ENCODE measurements at regions of chr7 and their contacts with region 1.

Region 1: DNA sequence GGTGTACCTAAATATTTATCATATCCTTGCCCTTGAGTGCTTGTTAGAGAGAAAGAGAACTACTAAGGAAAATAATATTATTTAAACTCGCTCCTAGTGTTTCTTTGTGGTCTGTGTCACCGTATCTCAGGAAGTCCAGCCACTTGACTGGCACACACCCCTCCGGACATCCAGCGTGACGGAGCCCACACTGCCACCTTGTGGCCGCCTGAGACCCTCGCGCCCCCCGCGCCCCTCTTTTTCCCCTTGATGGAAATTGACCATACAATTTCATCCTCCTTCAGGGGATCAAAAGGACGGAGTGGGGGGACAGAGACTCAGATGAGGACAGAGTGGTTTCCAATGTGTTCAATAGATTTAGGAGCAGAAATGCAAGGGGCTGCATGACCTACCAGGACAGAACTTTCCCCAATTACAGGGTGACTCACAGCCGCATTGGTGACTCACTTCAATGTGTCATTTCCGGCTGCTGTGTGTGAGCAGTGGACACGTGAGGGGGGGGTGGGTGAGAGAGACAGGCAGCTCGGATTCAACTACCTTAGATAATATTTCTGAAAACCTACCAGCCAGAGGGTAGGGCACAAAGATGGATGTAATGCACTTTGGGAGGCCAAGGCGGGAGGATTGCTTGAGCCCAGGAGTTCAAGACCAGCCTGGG is 11.4 kb downstream of the SERPINE1 start:
- DNase-seq: peak; percentile 87
- H3K4me3 ChIP-seq: no peak overlapping the region
- CTCF ChIP-seq: peak; percentile 70

Region 2: DNA sequence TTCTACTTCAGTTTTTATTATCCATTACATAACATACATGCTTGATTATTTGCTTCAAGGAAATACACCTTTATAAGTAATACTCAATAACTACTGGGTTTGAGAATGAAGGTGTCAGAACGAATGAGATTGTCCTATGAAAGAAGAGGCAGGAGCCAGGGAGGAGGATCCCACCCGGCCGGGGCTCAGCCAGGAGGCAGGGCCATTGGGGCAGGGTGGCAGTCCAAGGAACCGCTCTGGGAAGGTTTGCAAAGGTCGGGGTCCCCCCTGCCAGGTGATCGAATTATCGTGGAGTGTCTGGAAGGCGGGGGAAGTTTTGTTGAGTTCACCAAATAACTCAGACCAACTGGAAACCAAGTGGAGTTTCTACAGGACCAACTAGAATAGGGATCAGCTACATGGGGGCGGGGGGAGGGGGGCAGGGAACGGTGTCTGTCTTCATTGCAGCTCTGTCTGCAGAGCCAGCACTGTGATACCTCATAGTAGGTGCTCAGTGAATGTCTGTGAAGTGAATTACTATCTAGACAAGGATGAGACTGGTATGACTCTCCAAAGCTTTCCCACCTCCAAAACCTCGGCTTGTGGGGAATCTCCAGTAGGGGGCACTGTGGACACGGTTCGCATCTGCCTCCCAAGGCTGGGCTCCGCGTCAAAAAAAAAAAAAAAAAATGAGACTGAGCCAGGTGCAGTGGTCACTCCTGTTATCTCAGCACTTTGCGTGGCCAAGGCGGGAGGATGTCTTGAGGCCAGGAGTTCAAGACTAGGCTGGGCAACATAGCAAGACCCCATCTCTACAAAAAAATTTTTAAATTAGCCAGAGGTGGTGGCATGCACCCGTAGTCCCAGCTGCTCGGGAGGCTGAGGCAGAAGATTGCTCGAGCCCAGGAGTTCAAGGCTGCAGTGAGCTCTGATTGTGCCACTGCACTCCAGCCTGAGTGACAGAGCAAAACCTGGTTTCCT is 43.6 kb before region 1 on chr7:
- CTCF ChIA-PET with region 1: interaction called, 55 read pairs
- POLR2A ChIA-PET with region 1: interaction called, 30 read pairs
- DNase-seq: no peak
- H3K4me3 ChIP-seq: no peak overlapping the region
- CTCF ChIP-seq: peak; percentile 71

Region 3: DNA sequence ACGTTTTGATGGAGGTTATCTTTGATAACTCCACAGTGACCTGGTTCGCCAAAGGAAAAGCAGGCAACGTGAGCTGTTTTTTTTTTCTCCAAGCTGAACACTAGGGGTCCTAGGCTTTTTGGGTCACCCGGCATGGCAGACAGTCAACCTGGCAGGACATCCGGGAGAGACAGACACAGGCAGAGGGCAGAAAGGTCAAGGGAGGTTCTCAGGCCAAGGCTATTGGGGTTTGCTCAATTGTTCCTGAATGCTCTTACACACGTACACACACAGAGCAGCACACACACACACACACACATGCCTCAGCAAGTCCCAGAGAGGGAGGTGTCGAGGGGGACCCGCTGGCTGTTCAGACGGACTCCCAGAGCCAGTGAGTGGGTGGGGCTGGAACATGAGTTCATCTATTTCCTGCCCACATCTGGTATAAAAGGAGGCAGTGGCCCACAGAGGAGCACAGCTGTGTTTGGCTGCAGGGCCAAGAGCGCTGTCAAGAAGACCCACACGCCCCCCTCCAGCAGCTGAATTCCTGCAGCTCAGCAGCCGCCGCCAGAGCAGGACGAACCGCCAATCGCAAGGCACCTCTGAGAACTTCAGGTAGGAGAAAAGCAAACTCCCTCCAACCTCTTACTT is 11.6 kb before region 1 on chr7 and contains the start of gene SERPINE1:
- CTCF ChIA-PET with region 1: interaction called, 11 read pairs
- POLR2A ChIA-PET with region 1: interaction called, 61 read pairs
- DNase-seq: peak; percentile 99
- H3K4me3 ChIP-seq: peak within 1 kb of the TSS; percentile 86
- CTCF ChIP-seq: no peak

Region 4: GRCh38 chr7:101165075-101165957 is 27.0 kb after region 1 on chr7 and contains the start of gene VGF:
- CTCF ChIA-PET with region 1: interaction called, 28 read pairs
- POLR2A ChIA-PET with region 1: no interaction called
- DNase-seq: no peak
- H3K4me3 ChIP-seq: peak within 1 kb of the TSS; percentile 13
- CTCF ChIP-seq: no peak

Region 5: DNA sequence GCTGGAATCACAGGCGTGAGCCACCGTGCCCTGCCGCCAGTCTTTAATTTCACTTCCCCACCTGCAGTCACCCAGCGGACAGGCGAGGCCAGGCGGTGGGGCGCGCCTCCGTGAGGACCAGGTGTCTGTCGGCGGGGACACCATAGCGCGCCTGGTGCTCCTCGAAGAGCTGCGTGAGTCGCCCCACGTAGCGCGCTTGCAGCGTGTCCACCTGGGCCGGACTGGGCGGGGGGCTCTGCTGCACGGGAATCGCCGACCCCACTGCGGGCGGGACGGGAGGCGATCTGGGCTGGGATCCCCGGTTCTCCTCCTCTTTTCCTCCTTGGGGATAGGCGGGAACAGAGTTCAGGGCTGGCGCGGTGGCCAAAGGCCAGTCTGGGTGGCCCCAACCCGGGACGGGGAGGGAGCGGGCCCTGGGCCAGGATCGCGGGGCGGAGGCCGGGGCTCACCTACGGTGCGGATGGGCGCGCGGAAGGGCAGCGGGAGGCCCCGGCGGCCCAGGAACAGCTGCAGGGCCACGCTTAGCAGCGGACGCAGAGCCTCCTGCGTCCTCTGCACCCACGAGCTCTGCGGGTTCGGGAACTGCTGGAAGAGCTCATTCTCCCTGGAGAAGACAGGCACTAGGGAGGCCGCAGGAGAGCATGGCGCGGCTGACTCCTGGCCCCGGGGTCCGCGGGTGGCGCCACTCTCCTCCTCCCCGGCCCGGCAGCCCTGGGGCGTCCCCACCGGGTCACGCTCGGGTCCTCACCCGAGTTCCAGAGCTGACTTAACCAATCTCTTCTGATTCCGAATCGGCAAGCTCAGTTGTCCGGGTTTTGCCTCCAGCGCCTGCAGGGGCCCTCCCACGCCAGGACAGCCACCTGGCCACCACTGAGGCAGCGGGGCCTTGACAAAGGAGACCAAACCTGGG is 63.6 kb after region 1 on chr7:
- CTCF ChIA-PET with region 1: interaction called, 353 read pairs
- POLR2A ChIA-PET with region 1: no interaction called
- DNase-seq: no peak
- H3K4me3 ChIP-seq: no peak overlapping the region
- CTCF ChIP-seq: no peak

Region 6: GRCh38 chr7:101251871-101252659 is 113.7 kb after region 1 on chr7:
- CTCF ChIA-PET with region 1: interaction called, 95 read pairs
- POLR2A ChIA-PET with region 1: no interaction called
- DNase-seq: peak; percentile 90
- H3K4me3 ChIP-seq: peak overlapping the region; percentile 70
- CTCF ChIP-seq: no peak

Region 7: GRCh38 chr7:101386558-101387231 is 248.4 kb after region 1 on chr7:
- CTCF ChIA-PET with region 1: no interaction called
- POLR2A ChIA-PET with region 1: no interaction called
- DNase-seq: no peak
- H3K4me3 ChIP-seq: peak overlapping the region; percentile 27; the same call in 1 of the 2 replicates
- CTCF ChIP-seq: no peak

Region 8: DNA sequence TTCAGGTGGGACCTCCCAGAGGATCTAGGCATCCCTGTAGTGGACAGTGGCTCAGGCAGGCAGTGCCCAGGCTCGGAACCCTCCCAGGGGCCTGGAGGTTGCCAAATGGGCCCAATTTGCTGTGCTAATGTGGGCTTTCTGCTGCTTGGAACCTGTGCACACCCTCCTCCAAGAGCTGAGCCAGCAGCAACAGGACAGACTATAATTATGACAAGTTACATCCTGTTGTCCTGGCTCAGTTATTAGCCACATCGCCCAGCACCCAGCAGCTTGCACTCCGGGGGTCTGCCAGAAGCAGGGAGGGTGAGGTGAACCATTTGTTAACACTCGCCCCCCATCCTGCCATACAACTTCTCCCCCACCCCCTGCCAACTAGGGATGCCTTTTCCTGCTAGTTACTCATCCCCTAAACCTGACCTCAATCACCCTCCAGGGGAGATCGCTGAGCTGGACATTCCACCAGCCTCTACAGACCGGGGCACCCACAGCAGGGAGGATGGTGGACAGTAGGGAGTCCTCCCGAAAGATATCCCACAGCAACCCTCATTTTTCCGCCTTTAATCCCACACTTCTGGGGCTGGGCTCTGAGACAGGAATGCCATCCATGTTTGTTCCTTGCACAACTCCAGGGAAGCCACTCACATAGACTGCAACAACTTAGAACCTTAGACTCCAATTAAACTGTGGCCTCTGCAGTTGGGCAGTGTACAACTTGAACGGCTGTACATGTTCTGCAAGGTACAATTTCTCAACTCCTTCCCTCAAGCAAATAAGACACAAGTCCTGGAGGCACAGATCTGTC is 498.7 kb after region 1 on chr7:
- CTCF ChIA-PET with region 1: no interaction called
- POLR2A ChIA-PET with region 1: no interaction called
- DNase-seq: no peak
- H3K4me3 ChIP-seq: no peak overlapping the region
- CTCF ChIP-seq: no peak